ENCODE measurements at regions of chr6 and their contacts with region 1.

Region 1: DNA sequence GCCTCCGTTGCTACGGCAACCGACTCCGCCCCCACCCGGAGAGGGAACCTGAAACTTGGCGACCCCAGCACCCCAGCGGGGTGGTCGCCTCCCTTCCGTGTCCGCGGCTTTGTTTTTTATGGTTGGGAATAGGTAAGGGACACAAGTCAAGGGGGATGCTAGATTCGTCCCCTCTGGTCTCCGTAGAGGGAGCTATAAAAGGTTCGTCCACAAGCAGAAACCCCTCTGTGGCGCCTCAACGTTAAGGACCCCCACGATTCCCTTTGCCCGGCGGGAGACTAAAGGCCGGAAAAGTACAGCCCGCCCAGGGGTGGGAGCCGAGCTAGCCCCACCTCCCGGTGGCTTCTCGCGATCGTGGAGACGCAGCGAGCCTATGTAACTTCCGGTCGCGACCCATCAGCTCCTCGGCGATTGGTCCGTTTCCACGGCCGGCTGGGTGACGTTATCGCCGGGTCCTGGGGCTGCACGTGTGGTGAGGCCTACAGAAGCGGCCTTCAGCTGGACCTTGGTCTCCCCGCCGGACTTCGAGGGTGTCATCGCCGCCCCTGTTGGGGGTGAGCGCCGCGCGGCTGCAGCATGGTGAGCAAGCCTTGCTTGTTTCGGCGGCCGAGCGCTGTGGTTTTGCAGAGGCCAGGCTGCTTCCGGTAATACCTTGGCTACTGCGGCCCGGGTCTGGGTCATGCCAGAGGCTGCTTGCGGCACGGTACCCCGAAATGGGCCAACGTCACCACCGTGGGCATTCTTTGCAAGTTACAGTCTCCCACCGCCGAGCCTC is at the start of gene LTV1:
- DNase-seq: peak; percentile 98
- H3K4me3 Mint-ChIP-seq: peak within 1 kb of the TSS; percentile 99
- H3K27ac Mint-ChIP-seq: peak within 1 kb of the TSS; percentile 97
- H3K4me1 Mint-ChIP-seq: peaks cover 19% of the 10 kb centered on the region
- H3K27me3 Mint-ChIP-seq: no peaks in the 10 kb centered on the region
- total RNA-seq, gene LTV1: 61.3 and 63.8 TPM in 2 replicates

Region 2: DNA sequence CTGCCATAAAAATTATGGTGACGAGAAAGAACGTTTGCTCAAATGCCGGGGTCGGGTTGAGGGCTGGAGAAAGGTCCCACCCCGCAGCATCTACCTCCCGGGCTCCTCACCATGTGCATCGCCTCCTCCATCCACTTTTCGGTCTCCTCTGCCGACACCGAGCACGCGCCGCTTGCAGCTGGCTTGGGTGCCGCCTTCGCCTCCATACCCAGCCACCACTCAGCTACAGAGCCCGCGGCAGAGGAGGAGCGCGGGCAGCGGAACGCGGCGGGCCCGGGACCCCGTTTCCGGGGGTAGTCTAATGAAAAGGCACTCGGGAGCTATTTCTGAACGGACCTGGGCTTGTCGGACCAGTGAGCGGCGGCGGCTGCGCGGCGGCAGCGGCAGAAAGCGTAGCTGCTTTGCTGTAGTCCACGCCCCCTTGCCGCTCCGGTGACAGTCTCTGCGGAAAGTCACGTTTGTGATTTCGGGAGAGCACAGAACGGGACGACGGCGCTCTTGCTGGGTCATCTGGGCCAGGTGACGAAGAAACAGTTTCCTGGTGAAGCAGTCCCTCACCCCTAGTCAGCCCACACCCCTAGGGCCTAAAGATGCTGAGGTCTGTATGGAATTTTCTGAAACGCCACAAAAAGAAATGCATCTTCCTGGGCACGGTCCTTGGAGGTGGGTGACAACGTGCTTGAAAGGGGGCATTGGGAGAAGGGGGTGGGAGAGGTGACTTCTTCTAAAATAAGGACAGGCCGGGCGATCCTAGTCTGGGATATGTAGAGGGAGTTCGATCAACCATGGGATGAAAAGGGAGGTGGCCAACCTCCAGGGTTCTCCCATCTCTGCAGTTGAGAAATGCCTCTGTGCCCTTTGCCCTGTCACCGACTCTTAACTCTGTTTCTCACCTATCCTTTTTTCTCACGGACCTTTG is 392.4 kb before region 1 on chr6 and contains the starts of genes ADAT2 and PEX3:
- intact Hi-C with region 1: loop called (anchors 2 kb)
- DNase-seq: peak; percentile 98
- H3K4me3 Mint-ChIP-seq: peak within 1 kb of the TSS; percentile 91
- H3K27ac Mint-ChIP-seq: peak within 1 kb of the TSS; percentile 99
- H3K4me1 Mint-ChIP-seq: peaks cover 36% of the 10 kb centered on the region
- H3K27me3 Mint-ChIP-seq: no peaks in the 10 kb centered on the region
- total RNA-seq, gene ADAT2: 46.0 and 47.7 TPM in 2 replicates
- total RNA-seq, gene PEX3: 26.0 and 28.5 TPM in 2 replicates

Region 3: DNA sequence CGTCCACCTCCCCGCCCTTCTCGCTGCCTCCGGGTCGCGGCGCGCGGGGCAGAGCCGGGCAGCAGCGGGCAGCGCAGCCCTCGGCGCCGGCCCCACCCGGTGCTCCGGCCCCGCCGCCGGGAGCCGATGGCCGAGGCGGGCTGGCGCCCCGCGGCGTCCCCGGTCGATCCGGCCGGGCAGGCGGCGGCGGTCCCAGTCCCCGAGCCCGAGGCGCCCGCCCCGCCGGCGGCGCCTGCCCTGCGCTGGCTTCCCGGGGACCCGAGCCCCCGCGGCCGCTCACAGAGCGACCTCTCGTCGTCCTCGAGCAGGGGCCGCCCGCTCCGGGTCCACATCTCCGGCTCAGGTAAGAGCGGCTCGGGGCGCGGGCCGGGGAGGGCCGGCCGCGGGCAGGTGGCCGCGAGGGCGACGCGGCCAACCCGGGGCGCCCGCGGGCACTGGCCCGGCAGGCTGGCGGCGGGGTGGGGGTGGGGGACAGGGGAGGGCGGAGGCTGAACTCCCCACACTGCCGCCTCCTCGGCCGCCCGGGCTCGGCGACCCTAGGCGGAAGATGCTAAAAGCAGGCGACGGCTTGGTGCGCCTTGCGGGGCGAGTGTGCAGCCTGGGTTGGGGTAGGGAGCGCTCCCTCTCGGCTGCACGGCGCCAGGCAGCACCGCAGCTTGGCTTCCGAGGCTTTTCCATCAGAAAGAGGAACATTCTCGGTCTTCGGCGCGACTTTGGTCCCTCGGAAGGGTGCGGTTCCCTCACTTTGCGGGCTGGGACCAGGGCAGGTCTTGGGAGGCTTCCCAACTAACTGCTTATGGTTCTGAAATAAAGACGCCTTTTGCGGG is 306.0 kb before region 1 on chr6:
- intact Hi-C with region 1: loop called (anchors 5 kb)
- DNase-seq: peak; percentile 90
- H3K4me3 Mint-ChIP-seq: peak overlapping the region; percentile 88
- H3K27ac Mint-ChIP-seq: peak overlapping the region; percentile 76
- H3K4me1 Mint-ChIP-seq: peaks cover 37% of the 10 kb centered on the region
- H3K27me3 Mint-ChIP-seq: no peaks in the 10 kb centered on the region

Region 4: GRCh38 chr6:143575440-143575839 is 267.6 kb before region 1 on chr6:
- intact Hi-C with region 1: loop called (anchors 2 kb)
- DNase-seq: peak; percentile 88
- H3K4me3 Mint-ChIP-seq: no peak overlapping the region
- H3K27ac Mint-ChIP-seq: no peak overlapping the region
- H3K4me1 Mint-ChIP-seq: peaks cover 5% of the 10 kb centered on the region
- H3K27me3 Mint-ChIP-seq: no peaks in the 10 kb centered on the region

Region 5: DNA sequence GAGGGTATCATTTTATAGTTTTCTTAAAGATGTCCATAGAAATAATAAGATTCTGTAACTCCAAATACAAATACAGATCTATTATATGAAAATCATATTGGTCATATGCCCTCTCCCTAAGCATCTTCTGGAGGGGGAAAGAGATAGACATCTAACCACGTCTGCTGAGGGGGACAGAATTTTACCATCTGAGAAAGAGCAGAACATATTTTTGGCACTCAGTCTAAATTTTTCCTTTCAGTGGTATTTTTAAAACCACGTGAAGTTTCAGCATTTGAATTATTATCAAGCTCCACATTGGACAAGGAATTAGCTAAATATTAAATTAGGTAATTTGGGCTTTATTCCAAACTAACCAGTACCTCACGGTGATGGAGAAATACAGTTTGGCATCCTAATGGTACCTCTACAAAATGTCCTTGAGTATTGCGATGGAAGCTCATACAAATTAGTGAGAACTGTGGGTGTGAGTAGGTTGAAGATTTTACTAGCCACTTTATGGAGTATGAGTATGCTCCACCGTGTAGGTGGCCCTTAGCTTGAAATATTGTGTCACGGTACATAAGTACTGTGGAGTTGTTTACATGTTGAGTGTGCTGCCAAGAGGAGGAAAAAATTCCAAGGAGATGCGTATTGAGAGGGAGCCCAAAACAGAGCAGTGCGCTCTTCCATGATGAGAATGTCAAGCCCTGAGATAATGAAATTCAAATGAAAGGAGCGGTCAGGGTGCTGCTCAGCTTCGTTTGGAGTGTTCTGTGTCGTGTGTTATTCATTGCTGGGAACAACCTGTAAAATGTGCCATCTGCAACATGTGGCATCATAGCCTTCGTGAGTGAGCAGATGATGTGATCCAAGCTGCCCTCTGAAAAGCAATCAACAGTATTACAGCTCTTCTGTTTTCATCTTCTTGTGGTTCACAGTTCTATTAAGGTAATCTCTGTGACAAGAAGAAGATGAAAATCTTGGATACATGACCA is 213.7 kb before region 1 on chr6:
- intact Hi-C with region 1: loop called (anchors 1 kb)
- DNase-seq: no peak
- H3K4me3 Mint-ChIP-seq: peak overlapping the region; percentile 3
- H3K27ac Mint-ChIP-seq: peak overlapping the region; percentile 72
- H3K4me1 Mint-ChIP-seq: peaks cover 36% of the 10 kb centered on the region
- H3K27me3 Mint-ChIP-seq: no peaks in the 10 kb centered on the region

Region 6: DNA sequence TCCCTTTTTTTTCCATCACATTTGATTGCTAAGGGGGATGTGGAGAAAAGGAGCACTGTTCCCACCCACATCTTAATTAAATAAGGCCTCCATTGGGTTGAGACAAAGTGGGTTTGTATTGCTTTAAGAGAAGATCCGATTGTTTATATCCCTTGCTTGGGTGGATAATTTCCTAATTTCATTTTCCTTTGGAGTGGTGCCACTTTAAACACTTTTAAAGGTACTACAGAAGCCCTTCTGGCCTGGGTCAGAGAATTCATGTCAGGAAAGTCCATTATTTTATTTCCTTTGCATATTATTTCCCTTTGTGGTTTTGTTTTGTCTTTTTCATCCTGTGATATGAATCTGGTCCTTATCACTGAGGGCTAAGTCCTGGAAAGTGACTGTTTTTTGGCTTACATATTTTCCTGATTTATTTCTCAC is 108.4 kb before region 1 on chr6:
- intact Hi-C with region 1: loop called (anchors 2 kb)
- DNase-seq: no peak
- H3K4me3 Mint-ChIP-seq: no peak overlapping the region
- H3K27ac Mint-ChIP-seq: no peak overlapping the region
- H3K4me1 Mint-ChIP-seq: peaks cover 38% of the 10 kb centered on the region
- H3K27me3 Mint-ChIP-seq: no peaks in the 10 kb centered on the region

Region 7: DNA sequence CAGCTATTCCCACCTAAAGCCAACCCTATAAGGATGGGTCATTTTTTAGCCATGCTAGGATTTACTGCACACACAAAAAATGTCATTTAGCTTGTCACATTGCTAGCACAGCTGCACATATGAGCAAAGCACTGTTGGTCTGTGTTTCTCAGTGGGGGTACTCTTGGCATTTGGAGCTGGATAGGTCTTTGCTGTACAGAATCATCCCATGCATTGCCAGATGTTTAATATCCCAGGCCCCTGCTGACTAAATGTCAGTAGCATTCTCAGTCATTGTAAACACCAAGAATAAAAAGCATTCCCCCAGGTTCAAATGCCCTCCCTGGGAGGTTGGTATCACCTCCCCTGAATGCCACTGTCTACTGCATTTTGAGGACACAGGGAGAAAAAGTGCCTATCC is 14.5 kb before region 1 on chr6:
- intact Hi-C with region 1: no loop called
- DNase-seq: no peak
- H3K4me3 Mint-ChIP-seq: no peak overlapping the region
- H3K27ac Mint-ChIP-seq: no peak overlapping the region
- H3K4me1 Mint-ChIP-seq: no peaks in the 10 kb centered on the region
- H3K27me3 Mint-ChIP-seq: no peaks in the 10 kb centered on the region

Region 8: DNA sequence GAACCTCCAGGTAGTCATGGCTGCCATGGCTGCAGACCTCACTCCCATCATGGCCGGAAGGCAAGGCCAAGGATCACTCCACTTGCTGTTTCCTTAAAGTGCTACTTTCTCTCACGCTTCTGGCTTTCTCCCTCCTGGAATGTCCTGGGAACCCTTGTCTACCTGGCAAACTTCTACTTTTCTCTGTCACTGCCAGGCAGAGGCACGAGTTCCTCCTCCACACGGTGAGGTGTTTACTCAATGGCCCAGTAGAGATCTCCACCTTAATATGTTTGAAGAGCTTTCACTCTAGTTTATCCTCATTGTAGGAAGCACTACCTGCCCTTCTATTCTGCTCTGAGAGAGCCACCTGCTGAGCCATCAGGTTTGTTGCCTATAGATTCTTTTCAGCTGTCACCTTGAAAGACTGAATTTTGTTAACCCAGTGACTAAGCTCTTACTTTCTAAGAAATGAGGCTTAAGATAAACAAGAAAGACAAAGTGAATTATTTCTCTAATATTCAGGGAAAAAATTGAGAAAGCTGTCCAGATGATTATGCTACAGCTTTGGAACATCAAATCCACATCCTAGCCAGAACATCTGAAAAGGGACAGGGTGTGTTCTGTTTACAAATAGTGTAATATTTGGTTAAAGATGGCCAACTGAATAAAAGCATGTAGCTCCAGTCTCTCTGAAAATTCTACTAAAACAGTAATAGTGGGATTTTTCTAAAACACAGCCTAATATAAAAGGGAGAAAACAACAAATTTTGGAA is 110.0 kb after region 1 on chr6:
- intact Hi-C with region 1: no loop called
- DNase-seq: no peak
- H3K4me3 Mint-ChIP-seq: no peak overlapping the region
- H3K27ac Mint-ChIP-seq: no peak overlapping the region
- H3K4me1 Mint-ChIP-seq: no peaks in the 10 kb centered on the region
- H3K27me3 Mint-ChIP-seq: no peaks in the 10 kb centered on the region

Region 9: DNA sequence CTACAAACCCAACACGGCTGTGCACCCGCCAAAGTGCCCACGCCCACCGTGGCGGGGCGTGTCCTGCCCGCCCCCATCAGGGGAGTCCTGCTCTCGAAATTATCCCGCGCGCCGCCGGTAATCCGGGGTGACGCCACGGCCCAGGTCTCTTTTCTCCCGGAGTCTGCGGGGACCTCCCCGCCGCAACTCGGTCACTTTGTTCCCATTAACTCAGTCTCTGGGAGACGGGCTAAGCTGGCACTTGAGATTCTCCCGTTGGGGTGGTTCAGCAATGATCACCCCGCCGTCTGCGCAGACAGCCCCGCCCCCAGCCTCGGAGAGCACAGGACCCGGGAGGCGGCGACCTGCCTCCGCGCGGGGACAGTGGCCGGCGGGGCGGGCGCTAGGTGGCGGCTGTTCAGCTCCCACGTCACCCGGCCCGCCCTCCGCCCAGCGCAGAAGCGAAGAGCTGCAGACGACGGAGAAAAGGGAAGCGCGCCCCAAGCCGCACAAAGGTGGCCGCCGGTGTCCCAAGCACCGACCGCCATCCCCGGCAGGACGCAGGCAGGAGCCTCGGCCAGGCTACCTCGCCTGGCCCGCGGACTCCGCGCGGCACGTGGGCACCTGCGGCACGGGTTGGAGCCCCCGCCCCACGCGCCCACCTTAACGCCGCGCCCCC is 220.8 kb after region 1 on chr6:
- intact Hi-C with region 1: loop called (anchors 2 kb)
- DNase-seq: peak; percentile 97
- H3K4me3 Mint-ChIP-seq: peak overlapping the region; percentile 92
- H3K27ac Mint-ChIP-seq: peak overlapping the region; percentile 91
- H3K4me1 Mint-ChIP-seq: peaks cover 41% of the 10 kb centered on the region
- H3K27me3 Mint-ChIP-seq: no peaks in the 10 kb centered on the region